WTC11 (cell line): ENCODE measurements at regions of chr2 and their contacts with region 1.

Region 1: DNA sequence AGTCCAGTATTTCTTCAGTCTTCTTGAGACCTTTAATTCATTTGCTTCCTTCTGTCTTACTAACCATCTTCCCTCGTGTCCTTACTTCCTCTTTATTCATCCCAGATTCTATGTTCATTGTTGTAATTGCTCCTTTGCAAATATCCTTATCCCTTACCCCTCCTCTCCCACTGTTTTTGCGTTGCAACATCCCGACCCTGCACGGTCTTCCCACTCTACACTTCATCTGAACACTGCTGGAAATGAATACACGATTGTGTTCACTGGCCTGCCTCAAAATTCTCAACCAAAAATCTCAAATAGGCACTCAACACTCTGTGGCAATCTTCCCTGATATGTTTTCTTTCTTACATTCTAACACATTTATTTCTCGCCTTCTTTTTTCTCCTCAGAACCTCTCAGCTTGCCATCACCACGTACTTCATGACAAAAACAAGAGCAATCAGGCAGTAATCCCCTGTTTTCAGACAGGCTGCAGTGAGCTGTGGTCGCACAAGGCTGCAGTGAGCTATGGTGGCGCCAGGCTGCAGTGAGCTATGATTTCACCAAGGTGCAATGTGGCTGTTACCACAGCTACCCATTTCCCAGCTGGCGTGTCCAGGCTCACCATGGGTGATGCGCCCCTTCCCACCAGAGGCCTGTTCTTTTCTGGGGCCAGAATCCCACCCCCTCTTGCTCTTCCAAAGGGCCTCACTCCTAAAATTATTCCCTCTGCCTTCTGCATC is 25.7 kb downstream of the TCF23 start:
- DNase-seq: no peak
- ATAC-seq: 0 out of 2 replicates have a peak, but pooled peaks have one; percentile 19
- H3K4me3 Mint-ChIP-seq: no peak overlapping the region
- H3K27ac Mint-ChIP-seq: no peak overlapping the region
- H3K4me1 Mint-ChIP-seq: no peaks in the 10 kb centered on the region
- H3K27me3 Mint-ChIP-seq: peaks cover 9% of the 10 kb centered on the region
- CTCF ChIP-seq: no peak

Region 2: GRCh38 chr2:27086090-27086723 is 88.3 kb before region 1 on chr2:
- CTCF ChIA-PET with region 1: interaction called, 18 read pairs
- POLR2A ChIA-PET with region 1: no interaction called
- DNase-seq: peak; percentile 97
- ATAC-seq: peak; percentile 81
- H3K4me3 Mint-ChIP-seq: peak overlapping the region; percentile 70
- H3K27ac Mint-ChIP-seq: no peak overlapping the region
- H3K4me1 Mint-ChIP-seq: peaks cover 21% of the 10 kb centered on the region
- H3K27me3 Mint-ChIP-seq: peaks cover 23% of the 10 kb centered on the region
- CTCF ChIP-seq: peak; percentile 98

Region 3: GRCh38 chr2:27115485-27115884 is 59.0 kb before region 1 on chr2:
- CTCF ChIA-PET with region 1: interaction called, 16 read pairs
- POLR2A ChIA-PET with region 1: no interaction called
- DNase-seq: no peak
- ATAC-seq: no peak
- H3K4me3 Mint-ChIP-seq: no peak overlapping the region
- H3K27ac Mint-ChIP-seq: no peak overlapping the region
- H3K4me1 Mint-ChIP-seq: peaks cover 9% of the 10 kb centered on the region; the same call in 1 of the 2 replicates
- H3K27me3 Mint-ChIP-seq: peaks cover 36% of the 10 kb centered on the region
- CTCF ChIP-seq: no peak

Region 4: DNA sequence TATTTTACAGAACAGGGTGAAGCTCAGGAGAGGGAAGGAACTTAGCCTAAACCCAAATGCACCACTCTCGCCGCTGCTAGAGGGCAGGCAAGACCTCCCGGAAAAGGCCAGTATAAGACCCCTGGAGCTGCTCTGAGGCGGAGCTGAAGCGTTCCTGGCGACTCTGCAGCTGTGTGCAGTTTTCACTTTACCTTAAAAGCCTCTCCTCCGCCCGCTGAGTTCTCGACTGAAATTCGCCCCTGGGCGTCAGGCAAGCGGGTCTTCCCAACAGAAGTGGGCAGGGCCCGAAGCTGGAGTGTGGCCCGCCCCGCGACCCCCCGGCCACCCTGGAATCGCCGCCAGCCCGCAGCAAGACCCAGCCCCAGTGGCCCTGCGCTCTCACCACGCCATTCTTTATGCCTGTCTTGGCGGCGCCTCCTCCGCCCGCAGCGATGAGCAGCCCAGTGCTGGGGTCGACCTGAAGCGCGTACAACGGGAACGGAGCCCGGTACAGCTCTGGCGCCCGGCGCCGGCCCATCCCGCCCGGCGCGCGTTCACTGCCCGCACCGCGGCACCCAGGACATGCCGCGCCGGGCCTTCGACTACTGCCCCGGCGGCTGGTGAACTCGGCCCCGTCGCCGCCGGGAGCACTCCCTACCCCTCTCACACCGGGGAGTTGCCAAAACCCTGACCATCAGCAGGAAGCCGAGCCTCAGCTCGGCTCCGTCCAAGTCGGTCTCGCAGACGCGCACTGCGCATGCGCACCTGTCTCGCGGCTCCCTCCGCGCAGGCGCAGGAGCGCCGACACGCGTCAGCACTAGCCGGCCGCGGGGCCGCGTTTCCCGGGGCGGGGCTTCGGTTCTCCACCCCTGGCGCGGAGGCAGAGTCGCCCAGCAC is 40.3 kb before region 1 on chr2 and contains the start of gene PREB:
- CTCF ChIA-PET with region 1: interaction called, 46 read pairs
- POLR2A ChIA-PET with region 1: interaction called, 3 read pairs
- DNase-seq: peak; percentile 99
- ATAC-seq: peak; percentile 93
- H3K4me3 Mint-ChIP-seq: peak within 1 kb of the TSS; percentile 90
- H3K27ac Mint-ChIP-seq: peak within 1 kb of the TSS; percentile 98
- H3K4me1 Mint-ChIP-seq: peaks cover 14% of the 10 kb centered on the region
- H3K27me3 Mint-ChIP-seq: peaks cover 5% of the 10 kb centered on the region
- CTCF ChIP-seq: no peak
- total RNA-seq, gene PREB: 56.7 to 69.2 TPM (median 56.7 TPM) in 3 replicates

Region 5: DNA sequence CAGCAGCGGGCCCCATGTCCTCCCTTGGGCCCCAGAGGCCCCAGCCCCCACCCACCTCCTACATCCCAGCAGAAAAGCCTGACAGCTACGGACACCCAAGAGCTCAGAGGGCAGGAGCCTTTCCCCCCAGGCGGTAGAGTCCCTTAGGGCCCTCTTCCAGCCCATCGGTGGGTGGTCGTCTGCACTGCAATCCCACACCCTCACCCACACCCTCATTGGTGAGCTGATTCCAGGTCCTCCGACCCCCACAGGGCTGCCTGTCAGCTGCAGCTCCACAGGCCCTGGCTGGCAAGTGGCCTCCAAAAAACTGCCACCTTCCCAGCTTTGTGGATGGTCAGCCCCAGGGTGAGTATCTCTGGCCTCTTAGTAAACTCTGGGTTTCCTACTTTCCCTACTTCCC is 15.2 kb before region 1 on chr2:
- CTCF ChIA-PET with region 1: interaction called, 43 read pairs
- POLR2A ChIA-PET with region 1: interaction called, 3 read pairs
- DNase-seq: no peak
- ATAC-seq: no peak
- H3K4me3 Mint-ChIP-seq: no peak overlapping the region
- H3K27ac Mint-ChIP-seq: no peak overlapping the region
- H3K4me1 Mint-ChIP-seq: peaks cover 3% of the 10 kb centered on the region
- H3K27me3 Mint-ChIP-seq: no peaks in the 10 kb centered on the region
- CTCF ChIP-seq: no peak

Region 6: DNA sequence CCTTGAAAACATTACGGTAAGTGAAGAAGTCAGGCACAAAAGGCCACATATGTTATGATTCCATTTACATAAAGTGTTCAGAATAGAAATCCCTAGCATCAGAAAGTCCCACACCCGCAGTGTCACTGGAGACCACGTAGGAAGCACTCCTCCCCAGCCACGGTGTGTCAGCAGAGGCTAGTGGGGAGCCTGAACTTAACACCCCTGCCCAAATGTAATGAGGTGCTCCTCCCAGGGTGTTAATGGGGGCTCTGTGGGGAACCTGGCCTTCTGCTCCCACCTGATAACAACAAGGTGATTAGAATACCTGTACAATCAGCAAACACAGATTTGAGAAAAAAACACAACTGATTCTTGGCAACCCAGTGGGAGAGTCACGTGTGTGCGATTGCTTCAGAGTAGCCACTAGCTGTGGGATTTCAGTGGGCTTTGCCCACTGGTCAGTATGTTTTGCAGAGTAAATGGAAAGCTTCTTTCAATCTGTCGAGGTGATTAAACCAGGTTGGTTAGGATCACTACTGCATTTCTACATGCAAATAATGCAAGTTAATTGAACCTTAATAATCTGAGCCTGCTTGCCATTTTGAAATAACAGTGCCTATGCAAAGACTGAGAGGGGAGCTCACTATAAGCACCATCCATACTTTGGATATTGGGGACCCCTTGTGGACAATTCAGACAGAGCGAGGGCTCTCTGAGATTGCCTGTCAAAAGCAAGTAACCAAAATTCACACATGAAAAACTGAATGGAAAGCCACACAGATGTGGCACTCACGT is 16.8 kb after region 1 on chr2:
- CTCF ChIA-PET with region 1: interaction called, 50 read pairs
- POLR2A ChIA-PET with region 1: no interaction called
- DNase-seq: peak; percentile 54
- ATAC-seq: peak; percentile 88
- H3K4me3 Mint-ChIP-seq: no peak overlapping the region
- H3K27ac Mint-ChIP-seq: no peak overlapping the region
- H3K4me1 Mint-ChIP-seq: no peaks in the 10 kb centered on the region
- H3K27me3 Mint-ChIP-seq: no peaks in the 10 kb centered on the region; the same call in 1 of the 2 replicates
- CTCF ChIP-seq: 0 out of 2 replicates have a peak, but pooled peaks have one; percentile 19

Region 7: DNA sequence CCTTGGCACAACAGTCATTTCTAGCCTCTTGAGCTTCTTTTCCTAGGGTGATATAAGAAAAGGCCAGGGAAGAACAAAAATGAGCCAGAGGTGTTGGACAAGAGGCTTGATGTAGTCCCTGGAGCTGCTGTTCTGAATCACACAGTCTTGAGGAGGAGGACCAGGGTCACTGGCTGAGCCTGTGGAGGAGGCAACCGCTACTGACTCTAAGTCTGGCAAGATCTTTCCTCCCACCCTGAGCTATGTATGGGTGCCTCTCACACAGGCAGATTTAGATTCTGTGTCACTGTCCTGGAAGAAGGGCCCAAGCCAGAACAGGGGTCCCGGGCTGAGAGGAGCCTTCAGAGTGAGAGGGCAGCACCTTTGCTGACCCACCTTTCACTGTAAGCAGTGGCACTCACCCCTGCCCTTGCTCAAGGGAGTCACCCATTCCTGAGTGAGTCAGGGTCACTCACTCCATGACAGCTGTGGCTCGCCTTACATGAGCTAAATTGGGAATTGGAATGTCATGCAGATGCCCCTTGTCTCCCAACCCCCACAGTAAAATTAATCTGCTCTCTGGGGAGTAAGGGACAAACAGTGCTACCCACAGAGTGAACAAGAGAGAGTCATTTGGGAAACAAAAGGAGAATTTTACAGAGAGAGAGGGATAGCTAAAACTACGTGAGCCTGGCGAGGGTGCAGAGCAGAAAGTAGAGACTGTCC is 107.5 kb after region 1 on chr2 and contains the start of gene TRIM54:
- CTCF ChIA-PET with region 1: interaction called, 10 read pairs
- POLR2A ChIA-PET with region 1: no interaction called
- DNase-seq: no peak
- ATAC-seq: peak; percentile 59
- H3K4me3 Mint-ChIP-seq: peak within 1 kb of the TSS; percentile 54
- H3K27ac Mint-ChIP-seq: peak within 1 kb of the TSS; percentile 35
- H3K4me1 Mint-ChIP-seq: peaks cover 46% of the 10 kb centered on the region
- H3K27me3 Mint-ChIP-seq: no peaks in the 10 kb centered on the region; the same call in 1 of the 2 replicates
- CTCF ChIP-seq: no peak
- total RNA-seq, gene TRIM54: 3.0 to 3.4 TPM (median 3.3 TPM) in 3 replicates

Region 8: DNA sequence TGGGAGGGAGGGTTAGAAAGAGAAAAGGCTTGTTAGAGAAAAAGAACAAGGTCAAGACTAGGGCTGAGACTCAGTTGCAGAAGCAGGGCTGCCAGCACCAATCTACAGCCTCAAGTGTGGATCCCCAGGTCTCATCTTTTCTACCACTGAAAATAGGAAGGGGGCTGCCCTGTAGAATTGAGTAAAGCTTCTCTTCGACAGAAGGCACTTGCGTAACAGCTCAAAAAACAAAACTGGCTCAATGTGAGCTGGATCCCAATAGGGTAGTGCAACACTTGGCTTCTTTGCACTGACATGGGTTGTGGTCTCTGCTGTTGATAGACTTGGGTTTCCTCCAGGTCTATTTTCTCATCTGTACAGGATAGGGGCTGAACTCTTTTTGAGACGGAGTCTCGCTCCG is 150.2 kb after region 1 on chr2:
- CTCF ChIA-PET with region 1: no interaction called
- POLR2A ChIA-PET with region 1: no interaction called
- DNase-seq: no peak
- ATAC-seq: no peak
- H3K4me3 Mint-ChIP-seq: peak overlapping the region; percentile 2; the same call in 1 of the 2 replicates
- H3K27ac Mint-ChIP-seq: peak overlapping the region; percentile 40
- H3K4me1 Mint-ChIP-seq: peaks cover 11% of the 10 kb centered on the region
- H3K27me3 Mint-ChIP-seq: no peaks in the 10 kb centered on the region
- CTCF ChIP-seq: no peak

Region 9: GRCh38 chr2:27380626-27381545 is 206.4 kb after region 1 on chr2 and contains the start of gene ZNF513:
- CTCF ChIA-PET with region 1: no interaction called
- POLR2A ChIA-PET with region 1: no interaction called
- DNase-seq: peak; percentile 96
- ATAC-seq: peak; percentile 89
- H3K4me3 Mint-ChIP-seq: peak within 1 kb of the TSS; percentile 94
- H3K27ac Mint-ChIP-seq: peak within 1 kb of the TSS; percentile 100
- H3K4me1 Mint-ChIP-seq: peaks cover 20% of the 10 kb centered on the region
- H3K27me3 Mint-ChIP-seq: no peaks in the 10 kb centered on the region; the same call in 1 of the 2 replicates
- CTCF ChIP-seq: no peak
- total RNA-seq, gene ZNF513: 23.6 to 27.4 TPM (median 24.5 TPM) in 3 replicates

Region 10: GRCh38 chr2:27409321-27410073 is 235.0 kb after region 1 on chr2 and contains the start of gene PPM1G:
- CTCF ChIA-PET with region 1: no interaction called
- POLR2A ChIA-PET with region 1: no interaction called
- DNase-seq: peak; percentile 98
- ATAC-seq: peak; percentile 92
- H3K4me3 Mint-ChIP-seq: peak within 1 kb of the TSS; percentile 84
- H3K27ac Mint-ChIP-seq: peak within 1 kb of the TSS; percentile 97
- H3K4me1 Mint-ChIP-seq: peaks cover 18% of the 10 kb centered on the region
- H3K27me3 Mint-ChIP-seq: peaks cover 13% of the 10 kb centered on the region
- CTCF ChIP-seq: no peak
- total RNA-seq, gene PPM1G: 140 to 193 TPM (median 147 TPM) in 3 replicates